ENCODE measurements at regions of chr19 and their contacts with region 1.

Region 1: GRCh38 chr19:38975214-38975860 is at the start of gene FBXO17:
- DNase-seq: peak; percentile 49
- CTCF ChIP-seq: no peak

Region 2: DNA sequence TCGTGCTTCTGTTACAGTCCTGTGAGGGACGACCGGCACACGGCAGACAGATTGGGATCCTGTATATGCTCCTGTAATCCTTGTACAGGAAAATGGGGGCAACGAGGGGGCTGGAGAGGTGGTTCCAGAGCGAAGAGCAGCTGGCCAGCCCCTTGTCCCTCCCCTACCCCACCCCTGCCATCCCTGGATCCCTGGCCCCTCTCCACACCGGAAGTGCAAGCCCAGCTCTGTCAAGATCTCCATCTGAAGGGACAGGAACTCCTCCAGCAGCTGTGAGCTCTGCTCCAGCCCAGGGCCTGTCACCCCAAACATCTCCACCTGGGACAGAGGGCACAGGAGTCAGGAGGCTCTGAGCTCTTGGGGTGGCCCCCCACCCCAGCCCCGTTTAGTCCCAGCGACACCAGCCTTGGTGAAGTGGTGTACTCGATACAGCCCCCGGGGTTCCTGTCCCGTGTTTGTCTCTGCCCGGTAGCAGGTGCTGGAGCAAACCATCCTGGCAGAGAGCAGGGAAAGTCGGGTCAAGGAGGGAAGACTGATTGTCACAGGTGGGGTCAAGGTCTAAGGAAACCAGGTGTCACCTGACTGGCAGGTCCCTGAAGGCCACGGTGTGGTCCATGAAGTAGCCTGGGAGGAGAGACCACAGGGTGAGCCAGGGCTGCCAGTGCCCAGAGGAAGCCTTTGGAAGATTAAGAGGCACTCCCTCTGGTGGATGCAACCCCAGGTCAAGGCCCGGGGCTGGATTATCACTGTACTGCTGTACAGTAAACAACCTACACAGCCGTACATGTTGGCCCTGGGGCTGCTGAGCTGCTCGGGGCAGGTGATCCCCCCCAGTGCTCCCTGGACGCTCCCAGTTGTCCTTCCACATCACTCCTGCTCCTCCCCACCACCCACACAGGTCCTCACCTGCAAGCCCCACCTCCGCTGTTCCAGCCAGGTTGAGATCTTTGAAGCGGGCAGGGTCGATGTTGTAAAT is 57.5 kb before region 1 on chr19:
- CTCF ChIA-PET with region 1: no interaction called
- POLR2A ChIA-PET with region 1: no interaction called
- DNase-seq: no peak
- CTCF ChIP-seq: no peak

Region 3: GRCh38 chr19:38959618-38960017 is 15.7 kb before region 1 on chr19:
- CTCF ChIA-PET with region 1: interaction called, 18 read pairs
- POLR2A ChIA-PET with region 1: no interaction called
- DNase-seq: no peak
- CTCF ChIP-seq: no peak

Region 4: GRCh38 chr19:38993271-38993670 is 17.9 kb after region 1 on chr19:
- CTCF ChIA-PET with region 1: interaction called, 17 read pairs
- POLR2A ChIA-PET with region 1: interaction called, 4 read pairs
- DNase-seq: no peak
- CTCF ChIP-seq: no peak